ENCODE measurements at regions of chr2 and their contacts with region 1.

Region 1: DNA sequence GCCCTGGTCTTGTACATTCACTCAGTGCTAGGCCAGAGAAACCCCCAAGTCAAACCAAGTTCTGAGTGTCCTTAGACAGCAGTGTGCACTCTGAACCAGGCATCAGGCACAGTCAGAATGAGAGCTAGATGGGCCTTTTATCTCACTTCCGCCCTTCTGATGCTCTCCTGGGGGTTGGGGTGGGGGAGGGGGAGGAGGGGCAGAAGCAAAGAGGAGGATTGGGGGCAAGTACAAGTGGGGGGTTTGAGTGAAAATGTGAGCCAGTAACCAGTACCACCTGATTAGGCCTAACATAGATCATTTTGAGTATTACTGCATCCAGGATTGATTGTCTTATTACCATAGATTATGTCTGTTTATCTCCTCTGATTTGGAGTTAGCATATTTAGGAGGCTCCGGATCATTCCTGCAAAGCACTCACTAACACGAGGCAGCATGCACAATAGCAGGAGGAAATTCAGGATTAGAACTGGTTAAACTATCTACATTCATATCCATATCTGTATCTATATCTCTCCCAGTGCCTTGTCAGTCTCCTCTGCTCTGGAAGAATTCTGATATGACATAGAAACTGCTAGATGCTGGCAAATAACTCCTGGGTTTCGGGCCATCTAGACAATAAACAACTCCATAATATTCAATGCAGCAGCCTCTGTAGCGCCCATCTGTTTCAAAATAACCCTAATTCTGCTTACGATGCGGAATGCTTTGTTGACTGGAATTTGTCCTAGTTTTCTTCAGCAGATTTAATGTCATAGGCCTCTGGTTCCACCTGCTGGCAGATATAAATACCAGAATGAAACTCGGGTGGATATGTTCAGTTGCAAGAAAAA is 149.1 kb downstream of the RHBDD1 start:
- ATAC-seq: peak; percentile 70 to 89 (median 80)
- H3K4me3 ChIP-seq: no peak overlapping the region
- H3K27ac ChIP-seq: peak overlapping the region; percentile 34 to 37
- H3K4me1 ChIP-seq: peaks cover 15 to 20% of the 10 kb centered on the region in 2 donors

Region 2: GRCh38 chr2:225668606-225669266 is 1316.2 kb before region 1 on chr2:
- in situ Hi-C with region 1: loop called in 4 of 9 experiments (anchors 10 to 25 kb)
- ATAC-seq: peak in 7 of 8 experiments; percentile 46 to 95 (median 74)
- H3K4me3 ChIP-seq: no peak overlapping the region
- H3K27ac ChIP-seq: no peak overlapping the region
- H3K4me1 ChIP-seq: peaks cover 0 to 2% of the 10 kb centered on the region in 2 donors

Region 3: DNA sequence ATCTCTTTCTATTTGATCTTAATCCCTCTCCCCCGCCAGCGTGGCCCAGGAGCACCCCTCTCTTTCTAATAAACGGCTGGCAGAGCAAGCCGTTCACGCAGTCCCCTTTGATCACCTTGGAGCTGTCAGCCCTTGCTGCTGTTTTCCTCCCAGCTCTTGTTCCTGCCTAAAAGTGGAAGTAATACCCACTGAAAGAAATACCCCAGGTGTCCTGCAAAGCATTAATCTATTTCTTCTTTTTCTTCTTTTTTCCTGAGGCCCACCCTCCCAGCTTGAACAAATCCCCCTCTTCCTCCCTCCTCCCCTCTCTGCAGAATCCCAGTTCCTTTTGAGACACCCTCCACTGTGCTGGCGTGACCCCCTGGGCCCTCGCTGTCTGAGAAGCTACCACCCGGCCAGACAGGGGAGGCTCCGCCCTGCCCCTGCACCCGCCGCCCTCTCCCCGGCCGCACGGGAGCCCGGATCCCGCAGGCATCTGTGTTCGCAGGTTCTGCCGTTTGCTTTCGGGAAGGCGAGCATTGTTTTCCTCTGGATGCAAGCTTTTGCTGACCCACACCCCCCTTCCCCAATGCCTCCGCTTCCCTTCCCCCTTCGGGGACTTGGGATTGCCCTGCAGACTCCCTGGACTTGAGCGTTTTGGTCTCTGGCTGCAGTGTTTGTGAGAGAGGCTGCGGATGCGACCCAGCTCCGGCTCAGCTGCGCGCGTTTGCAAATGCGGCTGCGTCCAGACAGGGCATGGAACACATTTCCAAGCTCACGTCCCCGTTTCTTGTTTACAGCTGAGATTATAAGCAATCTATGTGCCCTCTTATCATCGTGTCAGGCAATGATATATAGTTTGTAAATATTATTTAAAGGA is 953.9 kb before region 1 on chr2:
- in situ Hi-C with region 1: loop called in 1 of 9 experiments (anchors 25 kb)
- ATAC-seq: peak; percentile 90 to 97 (median 92)
- H3K4me3 ChIP-seq: peak overlapping the region; percentile 41 to 56 (median 46)
- H3K27ac ChIP-seq: peak overlapping the region; percentile 92 to 97
- H3K4me1 ChIP-seq: peaks cover 12 to 14% of the 10 kb centered on the region in 2 donors

Region 4: GRCh38 chr2:226234183-226234582 is 750.8 kb before region 1 on chr2:
- in situ Hi-C with region 1: no loop called
- ATAC-seq: no peak
- H3K4me3 ChIP-seq: no peak overlapping the region
- H3K27ac ChIP-seq: no peak overlapping the region
- H3K4me1 ChIP-seq: no peaks in the 10 kb centered on the region

Region 5: DNA sequence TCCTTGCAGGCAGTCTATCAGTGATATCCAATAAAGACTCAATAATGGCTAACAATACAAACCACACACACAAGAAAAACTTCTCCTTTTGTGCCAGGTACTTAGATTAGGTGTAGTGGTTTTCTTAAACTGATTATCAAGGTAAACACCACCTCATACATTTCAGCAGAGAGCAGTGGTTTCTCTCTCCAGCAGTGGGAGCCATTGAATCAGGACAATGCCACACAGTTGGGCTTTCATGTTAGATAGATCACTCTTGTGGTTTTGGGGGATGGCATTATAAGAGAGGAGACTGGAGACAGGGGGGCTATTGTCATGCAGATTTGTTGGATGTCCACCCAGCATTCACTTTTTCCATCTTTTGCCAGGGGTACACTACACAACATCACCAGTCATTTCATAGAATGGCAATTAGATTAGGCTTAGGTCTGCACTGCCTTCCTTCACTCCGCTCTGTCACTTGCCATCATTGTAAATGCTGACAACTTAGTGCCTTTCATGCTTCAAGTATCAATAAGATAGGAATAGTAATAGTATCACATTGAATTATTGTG is 171.7 kb before region 1 on chr2:
- in situ Hi-C with region 1: loop called in 4 of 9 experiments (anchors 10 to 25 kb)
- ATAC-seq: peak in 3 of 8 experiments; percentile 33 to 53 (median 45)
- H3K4me3 ChIP-seq: no peak overlapping the region
- H3K27ac ChIP-seq: no peak overlapping the region
- H3K4me1 ChIP-seq: peaks cover 0 to 2% of the 10 kb centered on the region in 2 donors